PC-3 (cell line): ENCODE measurements at regions of chr21 and their contacts with region 1.

Region 1: GRCh38 chr21:35138665-35139381 is 89.7 kb upstream of the RUNX1 start:
- DNase-seq: peak; percentile 94
- ATAC-seq: peak; percentile 58
- H3K4me3 ChIP-seq: peak overlapping the region; percentile 16; the same call in 1 of the 2 replicates
- H3K27ac ChIP-seq: peak overlapping the region; percentile 87
- H3K4me1 ChIP-seq: peaks cover 42% of the 10 kb centered on the region
- H3K27me3 ChIP-seq: no peaks in the 10 kb centered on the region
- CTCF ChIP-seq: no peak; the same call in 1 of the 2 replicates

Region 2: GRCh38 chr21:34900376-34900775 is 238.4 kb before region 1 on chr21:
- CTCF ChIA-PET with region 1: no interaction called
- POLR2A ChIA-PET with region 1: no interaction called
- intact Hi-C with region 1: loop called (anchors 5 kb)
- DNase-seq: peak; percentile 96
- ATAC-seq: peak; percentile 97
- H3K4me3 ChIP-seq: 0 out of 2 replicates have a peak overlapping the region, but pooled peaks have one; percentile 19
- H3K27ac ChIP-seq: peak overlapping the region; percentile 78
- H3K4me1 ChIP-seq: peaks cover 22% of the 10 kb centered on the region
- H3K27me3 ChIP-seq: no peaks in the 10 kb centered on the region
- CTCF ChIP-seq: no peak

Region 3: DNA sequence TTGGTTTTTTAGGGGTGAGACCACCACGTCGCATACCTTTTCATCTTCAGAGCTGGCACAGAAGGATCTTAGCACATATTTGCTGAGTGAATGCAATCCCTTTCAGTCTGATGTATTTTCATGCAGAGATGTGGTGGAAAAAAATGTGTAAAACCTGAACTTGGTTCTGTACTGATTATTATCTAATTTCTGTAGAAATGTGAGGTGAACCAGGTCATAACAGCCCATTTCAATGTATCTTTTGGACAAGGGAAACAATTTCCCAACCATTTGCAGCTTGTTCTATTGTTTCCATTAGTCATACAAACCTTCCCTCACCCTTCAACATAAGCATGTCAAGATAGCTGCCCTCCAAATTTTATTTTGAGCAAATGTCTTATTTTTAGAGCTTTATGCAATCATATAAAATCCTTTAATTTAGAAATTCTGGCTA is 42.9 kb before region 1 on chr21:
- CTCF ChIA-PET with region 1: no interaction called
- POLR2A ChIA-PET with region 1: interaction called, 30 read pairs
- intact Hi-C with region 1: no loop called
- DNase-seq: no peak
- ATAC-seq: no peak
- H3K4me3 ChIP-seq: no peak overlapping the region
- H3K27ac ChIP-seq: no peak overlapping the region
- H3K4me1 ChIP-seq: no peaks in the 10 kb centered on the region
- H3K27me3 ChIP-seq: no peaks in the 10 kb centered on the region
- CTCF ChIP-seq: no peak

Region 4: DNA sequence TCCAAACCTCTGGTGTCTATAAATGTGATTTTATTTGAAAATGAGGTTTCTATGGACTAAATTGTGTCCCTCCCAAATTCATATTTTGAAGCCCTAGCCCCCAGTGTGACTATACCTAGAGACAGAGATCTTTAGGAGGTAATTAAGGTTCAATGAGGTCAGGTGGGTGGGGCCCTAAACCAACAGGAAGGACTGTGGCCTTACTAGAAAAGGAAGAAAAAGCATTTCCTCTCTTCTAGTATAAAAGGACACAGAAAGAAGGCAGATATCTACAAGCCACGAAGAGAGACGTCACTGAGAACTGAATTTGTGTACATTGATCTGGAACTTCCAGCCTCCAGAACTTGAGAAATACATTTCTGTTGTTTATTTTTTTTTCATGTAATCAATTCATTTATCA is 33.4 kb after region 1 on chr21:
- CTCF ChIA-PET with region 1: no interaction called
- POLR2A ChIA-PET with region 1: interaction called, 14 read pairs
- intact Hi-C with region 1: no loop called
- DNase-seq: no peak
- ATAC-seq: no peak
- H3K4me3 ChIP-seq: no peak overlapping the region
- H3K27ac ChIP-seq: no peak overlapping the region
- H3K4me1 ChIP-seq: no peaks in the 10 kb centered on the region
- H3K27me3 ChIP-seq: no peaks in the 10 kb centered on the region
- CTCF ChIP-seq: no peak

Region 5: DNA sequence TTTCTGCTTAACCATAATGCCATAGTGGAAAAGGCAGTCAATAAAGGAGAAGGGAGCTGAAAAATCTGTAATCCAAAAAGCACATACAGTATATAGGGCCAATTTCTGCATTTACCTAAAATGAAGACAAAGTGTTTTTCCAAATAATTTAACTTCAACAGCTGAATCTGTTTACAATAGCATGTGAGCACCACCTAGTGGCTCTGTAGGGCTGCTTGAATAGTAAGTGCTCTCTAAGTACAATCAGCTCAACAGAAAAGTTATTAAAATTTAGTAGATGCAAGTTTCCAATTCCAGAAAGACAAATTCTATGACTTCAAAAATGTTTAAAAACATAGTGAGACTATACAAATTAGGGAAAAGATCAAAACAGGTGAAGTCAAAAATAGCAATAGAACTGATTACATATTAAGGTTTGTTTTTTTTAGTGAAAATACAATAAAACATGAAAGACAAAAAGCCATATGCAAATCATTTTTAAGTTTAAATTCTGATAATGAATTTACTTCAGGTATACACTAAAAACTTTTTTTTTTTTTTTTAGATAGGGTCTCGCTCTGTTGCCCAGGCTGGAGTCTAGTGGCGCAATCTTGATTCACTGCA is 701.5 kb after region 1 on chr21:
- CTCF ChIA-PET with region 1: no interaction called
- POLR2A ChIA-PET with region 1: interaction called, 15 read pairs
- intact Hi-C with region 1: no loop called
- DNase-seq: peak; percentile 82
- ATAC-seq: peak; percentile 81
- H3K4me3 ChIP-seq: no peak overlapping the region
- H3K27ac ChIP-seq: no peak overlapping the region
- H3K4me1 ChIP-seq: no peaks in the 10 kb centered on the region
- H3K27me3 ChIP-seq: no peaks in the 10 kb centered on the region
- CTCF ChIP-seq: peak; percentile 98